A549 (cell line): ENCODE measurements at regions of chr15 and their contacts with region 1.

Region 1: DNA sequence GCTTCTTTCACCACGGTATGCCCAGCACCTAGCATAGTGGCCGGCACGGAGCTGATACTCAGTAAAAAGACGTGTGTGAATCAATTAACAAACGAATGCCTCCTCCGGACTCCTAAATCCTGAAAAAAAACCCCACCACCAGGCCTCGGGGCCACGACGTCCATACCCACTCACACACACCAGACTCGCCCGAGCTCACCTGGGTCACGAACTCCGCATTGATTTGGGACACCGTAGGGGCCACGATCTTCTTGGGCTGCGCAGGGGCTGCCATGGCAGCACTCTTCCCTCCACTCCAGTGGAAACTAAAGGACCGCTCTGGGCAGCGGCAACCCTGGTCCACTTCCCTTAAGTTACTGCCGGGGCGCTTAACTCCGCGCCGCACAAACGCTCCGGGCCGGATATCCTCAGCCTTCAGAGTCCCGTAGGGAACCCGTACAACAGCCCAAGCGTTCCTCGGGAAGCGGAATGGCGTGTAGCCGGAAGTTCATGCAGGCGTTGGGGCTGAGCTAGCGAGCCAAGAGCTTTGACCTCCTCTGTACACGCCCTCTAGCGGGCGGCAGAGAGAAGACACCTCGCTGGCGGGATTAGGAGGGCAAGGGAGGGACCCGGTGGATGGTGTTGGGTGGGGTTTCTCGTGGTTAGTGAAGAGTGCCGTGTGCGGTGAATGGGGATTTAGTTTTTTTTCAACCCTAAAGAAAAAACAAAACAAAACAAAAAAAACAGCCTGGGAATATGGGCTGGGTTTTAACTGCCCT is at the start of gene AQR:
- DNase-seq: peak; percentile 96 to 99
- ATAC-seq: peak; percentile 100
- H3K4me3 ChIP-seq: peak within 1 kb of the TSS; percentile 74
- H3K27ac ChIP-seq: peak within 1 kb of the TSS; percentile 83 to 91
- H3K4me1 ChIP-seq: peaks cover 12% of the 10 kb centered on the region; the same call in 2 of the 3 replicates
- CTCF ChIP-seq: peak; percentile 87
- EP300 ChIP-seq: no peak
- POLR2A ChIP-seq: peak; percentile 87
- RAD21 ChIP-seq: peak; percentile 20 to 34; a peak in 2 of 5 replicates
- polyA plus RNA-seq, gene AQR: 51.6 and 58.5 TPM in 2 replicates

Region 2: GRCh38 chr15:34621675-34622074 is 347.8 kb before region 1 on chr15:
- CTCF ChIA-PET with region 1: interaction called, 10 read pairs
- POLR2A ChIA-PET with region 1: no interaction called
- DNase-seq: peak; percentile 7 to 42
- ATAC-seq: peak; percentile 48 to 76; a peak in 4 of 6 replicates
- H3K4me3 ChIP-seq: no peak overlapping the region
- H3K27ac ChIP-seq: no peak overlapping the region
- H3K4me1 ChIP-seq: no peaks in the 10 kb centered on the region
- CTCF ChIP-seq: peak; percentile 68
- EP300 ChIP-seq: no peak
- POLR2A ChIP-seq: no peak
- RAD21 ChIP-seq: peak; percentile 79

Region 3: GRCh38 chr15:34942363-34942762 is 27.2 kb before region 1 on chr15:
- CTCF ChIA-PET with region 1: interaction called, 25 read pairs
- POLR2A ChIA-PET with region 1: interaction called, 4 read pairs
- DNase-seq: no peak
- ATAC-seq: no peak
- H3K4me3 ChIP-seq: no peak overlapping the region
- H3K27ac ChIP-seq: no peak overlapping the region
- H3K4me1 ChIP-seq: no peaks in the 10 kb centered on the region
- CTCF ChIP-seq: no peak
- EP300 ChIP-seq: no peak
- POLR2A ChIP-seq: no peak
- RAD21 ChIP-seq: no peak

Region 4: GRCh38 chr15:34951993-34952392 is 17.5 kb before region 1 on chr15:
- CTCF ChIA-PET with region 1: interaction called, 18 read pairs
- POLR2A ChIA-PET with region 1: interaction called, 29 read pairs
- DNase-seq: no peak
- ATAC-seq: no peak
- H3K4me3 ChIP-seq: no peak overlapping the region
- H3K27ac ChIP-seq: no peak overlapping the region
- H3K4me1 ChIP-seq: no peaks in the 10 kb centered on the region
- CTCF ChIP-seq: no peak
- EP300 ChIP-seq: no peak
- POLR2A ChIP-seq: no peak
- RAD21 ChIP-seq: no peak

Region 5: GRCh38 chr15:34987985-34988873 is 18.7 kb after region 1 on chr15 and contains the start of gene ZNF770:
- CTCF ChIA-PET with region 1: interaction called, 22 read pairs
- POLR2A ChIA-PET with region 1: interaction called, 104 read pairs
- DNase-seq: peak; percentile 87 to 89
- ATAC-seq: peak; percentile 89 to 94
- H3K4me3 ChIP-seq: peak within 1 kb of the TSS; percentile 96
- H3K27ac ChIP-seq: peak within 1 kb of the TSS; percentile 95 to 98
- H3K4me1 ChIP-seq: peaks cover 28% of the 10 kb centered on the region
- CTCF ChIP-seq: no peak
- EP300 ChIP-seq: no peak
- POLR2A ChIP-seq: peak; percentile 98
- RAD21 ChIP-seq: no peak
- polyA plus RNA-seq, gene ZNF770: 46.2 and 49.0 TPM in 2 replicates

Region 6: GRCh38 chr15:35019386-35020083 is 50.0 kb after region 1 on chr15:
- CTCF ChIA-PET with region 1: interaction called, 4 read pairs
- POLR2A ChIA-PET with region 1: interaction called, 10 read pairs
- DNase-seq: peak in 1 of 2 experiments; percentile 41
- ATAC-seq: peak in 1 of 2 experiments; percentile 28; a peak in 1 of 6 replicates
- H3K4me3 ChIP-seq: peak overlapping the region; percentile 42
- H3K27ac ChIP-seq: no peak overlapping the region
- H3K4me1 ChIP-seq: 0 out of 3 replicates have a peak, but pooled peaks cover 4% of the 10 kb centered on the region
- CTCF ChIP-seq: no peak
- EP300 ChIP-seq: no peak
- POLR2A ChIP-seq: no peak
- RAD21 ChIP-seq: no peak